ENCODE measurements at regions of chr1 and their contacts with region 1.

Region 1: GRCh38 chr1:182446033-182446669 is 3.8 kb upstream of the RGSL1 start:
- DNase-seq: no peak
- ATAC-seq: peak; percentile 81
- H3K4me3 Mint-ChIP-seq: no peak overlapping the region
- H3K27ac Mint-ChIP-seq: no peak overlapping the region
- H3K4me1 Mint-ChIP-seq: peaks cover 4% of the 10 kb centered on the region
- H3K27me3 Mint-ChIP-seq: no peaks in the 10 kb centered on the region
- CTCF ChIP-seq: peak; percentile 58

Region 2: DNA sequence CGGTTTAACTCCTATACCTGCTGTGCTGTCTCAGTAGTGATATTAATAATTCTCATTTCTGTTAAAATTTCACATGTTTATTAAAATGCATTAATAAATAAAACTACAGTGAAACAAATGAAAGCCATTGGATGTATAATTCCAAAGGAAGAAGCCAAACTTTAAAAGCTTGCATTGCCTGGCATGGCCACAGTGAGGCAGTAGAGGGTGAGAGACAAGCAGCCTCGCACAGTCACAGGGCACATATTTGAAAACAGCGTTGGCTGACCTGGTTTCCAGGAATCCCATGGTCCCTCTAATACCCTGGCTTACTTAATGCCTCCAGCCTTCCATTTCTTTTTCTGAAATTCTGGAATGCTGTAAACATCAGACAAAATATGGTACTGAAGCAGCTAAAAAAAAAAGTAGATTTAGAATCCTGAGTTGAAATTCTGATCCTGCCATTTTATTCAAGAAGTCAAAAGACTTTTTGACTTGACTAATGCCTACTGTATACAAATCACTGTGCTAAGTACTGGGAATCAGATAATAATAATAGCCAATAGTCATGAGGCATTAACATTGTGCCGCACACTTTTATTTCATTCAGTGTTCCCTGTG is 149.6 kb after region 1 on chr1:
- CTCF ChIA-PET with region 1: interaction called, 8 read pairs
- POLR2A ChIA-PET with region 1: no interaction called
- intact Hi-C with region 1: loop called (anchors 1 kb)
- DNase-seq: peak; percentile 33
- ATAC-seq: peak; percentile 90
- H3K4me3 Mint-ChIP-seq: no peak overlapping the region
- H3K27ac Mint-ChIP-seq: no peak overlapping the region
- H3K4me1 Mint-ChIP-seq: no peaks in the 10 kb centered on the region
- H3K27me3 Mint-ChIP-seq: no peaks in the 10 kb centered on the region
- CTCF ChIP-seq: peak; percentile 72